BJ (cell line): ENCODE measurements at regions of chr10 and their contacts with region 1.

Region 1: DNA sequence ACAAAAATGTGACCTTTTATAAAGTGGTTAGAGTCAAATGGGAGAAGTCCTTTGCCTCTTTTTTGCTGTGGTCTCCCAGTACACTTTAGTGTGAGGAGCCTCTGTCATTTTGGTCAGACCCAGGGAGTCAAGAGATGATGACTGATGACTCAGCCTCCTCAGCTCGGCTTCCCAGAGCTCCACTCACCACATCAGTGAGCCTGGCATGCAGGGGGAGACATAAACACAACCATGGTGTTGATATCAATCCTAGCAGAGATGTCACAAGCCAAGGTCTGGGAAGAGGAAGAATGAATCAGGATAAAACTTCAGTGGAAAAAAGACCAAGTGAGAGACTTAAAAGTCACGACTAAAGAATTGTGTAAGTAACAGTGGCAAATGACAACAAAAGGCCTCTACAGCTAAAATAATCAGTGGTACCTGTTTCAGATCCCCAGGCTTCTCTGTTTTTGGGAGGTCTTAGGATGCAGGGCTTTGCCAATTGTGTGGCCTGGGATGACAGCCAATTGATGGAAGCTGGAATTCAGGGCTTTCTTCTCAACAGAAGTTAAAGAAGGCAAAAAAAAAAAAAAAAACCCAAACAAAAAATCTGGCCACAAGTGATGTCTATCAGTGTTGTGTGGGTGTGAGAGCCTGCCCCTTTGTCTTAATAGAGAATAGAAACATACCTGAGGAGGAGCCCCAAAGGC is 50.2 kb downstream of the TFAM start:
- DNase-seq: peak; percentile 98
- H3K4me3 ChIP-seq: no peak overlapping the region
- H3K27me3 ChIP-seq: no peaks in the 10 kb centered on the region
- CTCF ChIP-seq: 0 out of 2 replicates have a peak, but pooled peaks have one; percentile 26

Region 2: GRCh38 chr10:58599927-58600553 is 164.6 kb after region 1 on chr10:
- CTCF ChIA-PET with region 1: no interaction called
- POLR2A ChIA-PET with region 1: interaction called, 10 read pairs
- DNase-seq: no peak
- H3K4me3 ChIP-seq: no peak overlapping the region
- H3K27me3 ChIP-seq: no peaks in the 10 kb centered on the region
- CTCF ChIP-seq: no peak

Region 3: GRCh38 chr10:58609532-58610150 is 174.2 kb after region 1 on chr10:
- CTCF ChIA-PET with region 1: no interaction called
- POLR2A ChIA-PET with region 1: interaction called, 15 read pairs
- DNase-seq: no peak
- H3K4me3 ChIP-seq: no peak overlapping the region
- H3K27me3 ChIP-seq: no peaks in the 10 kb centered on the region
- CTCF ChIP-seq: no peak